Gastrocnemius medialis (tissue), 4 donors: ENCODE measurements at regions of chr3 and their contacts with region 1.

Region 1: DNA sequence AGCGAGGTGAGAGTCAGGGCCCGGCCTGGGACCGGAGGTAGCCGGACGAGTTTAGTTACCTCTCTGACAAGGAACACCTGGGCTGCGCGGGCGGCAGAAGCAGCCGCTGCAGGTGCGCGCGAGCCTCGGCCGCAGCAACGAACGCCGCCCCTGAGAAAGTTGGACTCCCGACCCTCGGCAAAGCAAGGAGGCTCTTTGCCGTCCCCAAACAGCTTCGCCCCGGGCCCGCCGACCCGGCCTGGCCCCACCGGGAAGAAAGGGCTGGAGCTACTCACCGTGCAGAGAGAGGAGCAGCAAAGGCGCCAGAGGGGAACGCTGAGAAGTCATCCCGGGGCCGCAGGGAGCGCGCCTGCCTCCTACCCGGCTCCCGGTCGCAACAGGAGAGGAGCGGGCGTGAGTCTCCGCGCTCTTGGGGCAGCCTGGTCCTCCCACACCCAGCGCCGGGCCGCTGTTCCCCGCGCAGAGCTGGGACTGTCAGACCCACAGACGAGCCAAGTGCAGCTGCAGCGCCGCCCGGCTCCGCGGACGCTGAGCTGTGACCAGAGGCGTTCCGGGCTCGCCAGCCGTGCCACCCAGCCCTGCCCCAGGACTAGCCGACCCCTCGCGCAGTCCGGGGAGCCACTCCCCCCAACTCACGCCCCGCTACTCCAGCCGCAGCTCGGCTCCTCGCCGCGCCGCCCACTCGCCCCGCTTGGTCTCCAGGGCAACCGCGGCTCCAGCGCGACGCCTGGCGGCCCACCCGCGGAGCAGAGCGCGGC is at the start of gene IGSF11:
- DNase-seq: peak; percentile 16 to 71
- ATAC-seq: peak; percentile 92 to 94
- H3K4me3 ChIP-seq: peak within 1 kb of the TSS; percentile 68 to 76 (median 72)
- H3K27ac ChIP-seq: peak within 1 kb of the TSS; percentile 63 to 77 (median 68)
- H3K4me1 ChIP-seq: peaks cover 0 to 5% of the 10 kb centered on the region in 2 donors
- H3K27me3 ChIP-seq: peaks cover 0 to 2% (median 0%) of the 10 kb centered on the region in 3 donors
- CTCF ChIP-seq: peak in 4 of 5 experiments; percentile 77 to 86 (median 82)
- POLR2A ChIP-seq: peak in 1 of 2 donors; percentile 39
- total RNA-seq, gene IGSF11: 4.7 to 11.5 (median 8.6) TPM

Region 2: GRCh38 chr3:119063471-119063870 is 29.0 kb after region 1 on chr3:
- in situ Hi-C with region 1: no loop called
- intact Hi-C with region 1: no loop called
- DNase-seq: no peak
- ATAC-seq: no peak
- H3K4me3 ChIP-seq: no peak overlapping the region
- H3K27ac ChIP-seq: no peak overlapping the region
- H3K4me1 ChIP-seq: no peaks in the 10 kb centered on the region
- H3K27me3 ChIP-seq: no peaks in the 10 kb centered on the region
- CTCF ChIP-seq: no peak
- POLR2A ChIP-seq: no peak

Region 3: DNA sequence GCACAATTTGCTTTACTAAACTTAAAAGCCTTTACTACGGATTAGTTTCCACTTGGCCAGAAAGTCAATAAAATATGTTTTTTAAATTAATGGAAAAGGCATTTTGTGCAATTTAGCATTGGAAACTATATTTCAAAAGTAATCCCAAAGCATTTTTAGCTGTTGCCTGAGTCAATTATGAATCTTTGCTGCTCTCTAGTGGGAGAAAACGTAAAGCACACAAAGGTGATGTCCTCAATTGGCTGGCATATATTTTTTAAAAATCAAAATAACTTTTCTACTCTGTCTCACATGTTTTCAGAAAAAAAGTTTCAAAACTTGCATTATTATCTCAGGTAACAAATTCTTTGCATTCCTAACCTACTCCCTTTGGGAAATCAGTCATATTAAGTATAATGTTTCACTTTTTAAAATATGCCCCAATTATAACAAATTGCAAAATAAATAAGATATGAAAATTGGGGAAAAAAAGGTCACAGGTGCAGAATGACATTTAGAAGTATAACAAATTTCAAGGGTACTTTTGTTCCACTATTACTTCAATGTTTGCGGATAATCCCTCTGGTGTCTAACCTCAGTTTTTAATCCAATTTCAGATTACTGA is 64.3 kb after region 1 on chr3:
- in situ Hi-C with region 1: no loop called
- intact Hi-C with region 1: loop called (anchors 1 kb)
- DNase-seq: no peak
- ATAC-seq: peak in 1 of 2 donors; percentile 55
- H3K4me3 ChIP-seq: no peak overlapping the region
- H3K27ac ChIP-seq: no peak overlapping the region
- H3K4me1 ChIP-seq: no peaks in the 10 kb centered on the region
- H3K27me3 ChIP-seq: no peaks in the 10 kb centered on the region
- CTCF ChIP-seq: peak; percentile 56 to 77 (median 67)
- POLR2A ChIP-seq: no peak

Region 4: DNA sequence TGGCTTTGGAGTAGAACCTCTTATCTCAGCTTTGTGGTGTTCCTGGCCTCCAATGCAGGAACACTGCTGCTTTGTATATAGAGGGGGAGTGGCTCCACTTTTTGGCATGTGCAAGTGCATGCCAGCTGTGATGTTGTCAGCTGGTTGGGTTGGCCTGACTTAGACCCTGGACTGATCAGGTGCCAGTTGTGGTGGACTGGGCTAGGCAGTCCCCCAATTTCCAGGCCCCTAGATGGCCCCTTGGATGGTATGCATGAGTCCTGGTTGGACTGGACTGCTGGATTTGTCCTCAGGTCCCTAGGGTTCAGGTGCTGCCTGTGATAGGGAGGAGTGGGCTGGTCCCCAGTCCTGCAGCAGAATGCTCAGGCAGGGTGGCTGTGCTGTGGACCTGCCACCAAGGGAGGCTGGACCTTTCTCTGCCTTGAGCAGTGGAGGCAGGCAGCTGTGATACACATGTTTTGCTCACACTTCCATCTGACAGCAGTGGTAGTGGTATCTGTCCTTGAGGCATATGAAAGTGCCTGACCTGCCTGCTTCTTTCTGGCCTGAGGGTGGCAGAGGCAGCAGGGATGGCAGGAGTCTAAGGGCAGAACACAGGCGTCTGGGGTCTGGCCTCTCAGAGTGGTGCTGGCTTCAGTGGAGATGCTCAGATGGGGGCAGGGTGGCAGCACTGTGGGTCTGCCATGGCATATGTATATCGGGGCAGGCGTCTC is 1948.3 kb after region 1 on chr3:
- in situ Hi-C with region 1: no loop called
- intact Hi-C with region 1: no loop called
- DNase-seq: no peak
- ATAC-seq: no peak
- H3K4me3 ChIP-seq: no peak overlapping the region
- H3K27ac ChIP-seq: no peak overlapping the region
- H3K4me1 ChIP-seq: no peaks in the 10 kb centered on the region
- H3K27me3 ChIP-seq: no peaks in the 10 kb centered on the region
- CTCF ChIP-seq: no peak
- POLR2A ChIP-seq: no peak